Spleen (tissue), 13 donors: ENCODE measurements at regions of chr1 and their contacts with region 1.

Region 1: DNA sequence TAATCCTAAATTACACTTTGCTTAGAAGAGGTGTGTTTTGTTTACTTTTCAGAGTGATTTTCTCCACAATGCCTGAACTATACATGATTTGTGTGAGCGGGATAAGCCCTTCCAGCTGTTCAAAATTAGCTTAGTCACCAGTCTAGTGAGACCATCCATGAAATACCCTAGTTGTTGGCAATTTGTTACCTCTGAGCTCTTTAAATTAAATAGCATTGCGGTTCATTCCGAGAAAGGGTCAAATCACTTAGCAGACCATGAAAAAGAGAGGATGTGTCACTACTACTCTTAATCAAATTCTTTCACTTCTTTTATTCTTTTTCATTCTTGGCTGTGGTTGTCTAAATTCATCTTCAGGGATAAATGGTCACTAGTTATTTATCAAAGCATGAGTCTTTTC is 11.9 kb upstream of the VAV3 start:
- DNase-seq: no peak
- H3K4me3 ChIP-seq: no peak overlapping the region
- H3K27ac ChIP-seq: no peak overlapping the region
- H3K4me1 ChIP-seq: peaks cover 0 to 8% (median 0%) of the 10 kb centered on the region in 6 donors
- H3K27me3 ChIP-seq: no peaks in the 10 kb centered on the region
- CTCF ChIP-seq: no peak
- POLR2A ChIP-seq: no peak

Region 2: GRCh38 chr1:108049178-108049819 is 72.5 kb after region 1 on chr1:
- intact Hi-C with region 1: loop called (anchors 10 kb)
- DNase-seq: peak; percentile 81
- H3K4me3 ChIP-seq: peak overlapping the region in 1 of 8 donors; percentile 2
- H3K27ac ChIP-seq: peak overlapping the region in 7 of 8 donors; percentile 57 to 82 (median 74)
- H3K4me1 ChIP-seq: peaks cover 22 to 76% (median 51%) of the 10 kb centered on the region in 6 donors
- H3K27me3 ChIP-seq: no peaks in the 10 kb centered on the region
- CTCF ChIP-seq: peak; percentile 35 to 81 (median 67)
- POLR2A ChIP-seq: no peak